GM18951 (cell line): ENCODE measurements at regions of chr17 and their contacts with region 1.

Region 1: DNA sequence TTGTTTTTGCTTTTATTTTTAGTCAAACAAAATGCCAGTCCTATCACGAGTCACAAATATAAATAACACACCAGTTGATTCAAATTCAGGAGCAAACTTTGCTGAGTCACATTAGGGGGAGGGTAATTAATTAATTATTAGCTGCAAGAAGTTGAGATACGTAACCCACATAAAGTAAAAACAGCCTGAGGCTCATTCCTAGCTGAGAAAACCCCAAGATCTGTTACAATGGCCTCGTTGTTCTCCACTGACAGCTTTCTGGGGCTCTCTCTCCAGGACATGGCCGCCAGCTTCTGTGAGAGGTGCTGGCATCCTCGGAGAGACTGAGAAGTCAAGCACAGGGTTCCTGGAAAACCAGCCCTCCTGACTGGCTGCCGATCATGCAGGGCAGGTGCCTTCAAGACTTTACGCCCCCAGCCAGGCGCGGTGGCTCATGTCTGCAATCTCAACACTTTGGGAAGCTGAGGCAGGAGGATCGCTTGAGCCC is 11.1 kb downstream of the RAB40B start:
- POLR2A ChIP-seq: no peak

Region 2: GRCh38 chr17:81621494-81622130 is 1065.8 kb before region 1 on chr17:
- in situ Hi-C with region 1: no loop called
- POLR2A ChIP-seq: no peak

Region 3: GRCh38 chr17:82775001-82775823 is 87.8 kb after region 1 on chr17:
- in situ Hi-C with region 1: loop called (anchors 10 kb)
- POLR2A ChIP-seq: no peak